ENCODE measurements at regions of chr16 and their contacts with region 1.

Region 1: GRCh38 chr16:49183911-49184310 is 97.7 kb downstream of the CBLN1 start:
- DNase-seq: peak; percentile 75
- H3K4me3 ChIP-seq: no peak overlapping the region
- H3K27ac ChIP-seq: no peak overlapping the region
- H3K4me1 ChIP-seq: peaks cover 13% of the 10 kb centered on the region
- H3K27me3 ChIP-seq: no peaks in the 10 kb centered on the region
- CTCF ChIP-seq: peak; percentile 42

Region 2: GRCh38 chr16:49055824-49056545 is 127.9 kb before region 1 on chr16:
- intact Hi-C with region 1: loop called (anchors 10 kb)
- DNase-seq: no peak
- H3K4me3 ChIP-seq: no peak overlapping the region
- H3K27ac ChIP-seq: no peak overlapping the region
- H3K4me1 ChIP-seq: no peaks in the 10 kb centered on the region
- H3K27me3 ChIP-seq: no peaks in the 10 kb centered on the region
- CTCF ChIP-seq: no peak